Spleen (tissue), 13 donors: ENCODE measurements at regions of chr15 and their contacts with region 1.

Region 1: DNA sequence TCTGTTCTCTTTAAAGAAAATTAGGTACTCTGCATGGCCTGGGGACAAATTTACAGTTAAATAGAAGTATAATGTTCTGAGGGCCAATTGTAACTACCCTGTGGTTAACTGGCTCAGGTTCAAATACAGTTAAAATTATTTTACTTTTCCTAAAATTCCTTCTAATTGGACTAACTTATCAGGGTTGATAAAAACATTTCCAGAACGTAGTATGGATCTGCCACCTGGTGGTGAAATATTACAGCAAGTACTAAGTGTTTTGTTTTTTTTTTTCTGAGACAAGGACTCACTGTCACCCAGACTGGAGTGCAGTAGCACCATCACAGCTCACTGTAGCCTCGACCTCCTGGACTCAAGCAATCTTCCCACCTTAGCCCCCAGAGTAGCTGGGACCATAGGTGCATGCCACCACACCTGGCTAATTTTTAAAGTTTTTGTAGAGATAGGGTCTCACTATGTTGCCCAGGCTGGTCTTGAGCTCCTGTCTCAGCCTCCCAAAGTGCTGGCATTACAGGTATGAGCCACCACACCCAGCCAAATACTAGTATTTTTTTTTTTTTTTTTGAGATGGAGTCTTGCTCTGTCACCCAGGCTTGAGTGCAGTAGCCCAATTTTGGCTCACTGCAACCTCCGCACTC is 29.2 kb downstream of the NEO1 start:
- DNase-seq: no peak
- H3K4me3 ChIP-seq: no peak overlapping the region
- H3K27ac ChIP-seq: no peak overlapping the region
- H3K4me1 ChIP-seq: peaks cover 0 to 27% (median 19%) of the 10 kb centered on the region in 6 donors
- H3K27me3 ChIP-seq: peaks cover 0 to 57% (median 7%) of the 10 kb centered on the region in 7 donors
- CTCF ChIP-seq: peak in 9 of 11 experiments; percentile 31 to 70 (median 56)
- POLR2A ChIP-seq: no peak

Region 2: DNA sequence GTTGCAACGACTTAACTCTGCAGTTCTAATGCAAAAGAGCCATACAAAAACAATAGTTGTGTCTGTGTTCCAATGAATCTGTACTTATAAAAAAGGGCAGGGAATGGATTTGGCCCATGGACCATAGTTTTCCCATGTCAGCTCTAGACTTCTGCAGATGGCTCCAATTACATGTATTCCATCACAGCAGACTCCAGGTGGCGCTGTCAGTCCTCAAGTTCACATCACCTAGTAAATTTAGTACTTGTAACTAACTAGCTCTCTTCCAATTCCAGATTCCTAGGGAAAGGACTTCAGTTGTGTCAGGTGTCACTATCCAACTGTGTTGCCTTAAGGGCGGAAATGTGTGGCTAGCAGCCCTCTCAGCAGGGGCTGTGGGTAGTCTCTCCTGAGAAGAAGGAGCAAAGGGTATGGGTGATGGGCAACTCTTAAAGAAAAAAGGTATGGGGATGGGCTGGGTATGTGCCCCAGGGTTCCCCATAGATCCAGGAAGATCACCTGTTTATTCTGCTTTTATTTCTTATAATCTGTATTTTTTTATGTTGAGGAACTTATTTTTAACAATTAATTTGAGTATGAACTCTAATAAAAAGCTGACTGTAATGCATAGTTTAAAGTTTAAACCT is 359.3 kb before region 1 on chr15:
- intact Hi-C with region 1: loop called (anchors 5 kb)
- DNase-seq: peak; percentile 81
- H3K4me3 ChIP-seq: no peak overlapping the region
- H3K27ac ChIP-seq: no peak overlapping the region
- H3K4me1 ChIP-seq: no peaks in the 10 kb centered on the region
- H3K27me3 ChIP-seq: no peaks in the 10 kb centered on the region
- CTCF ChIP-seq: peak in 10 of 11 experiments; percentile 44 to 77 (median 63)
- POLR2A ChIP-seq: no peak

Region 3: GRCh38 chr15:72796515-72797337 is 284.7 kb before region 1 on chr15:
- intact Hi-C with region 1: loop called (anchors 5 kb)
- DNase-seq: peak; percentile 88
- H3K4me3 ChIP-seq: peak overlapping the region; percentile 35 to 72 (median 42)
- H3K27ac ChIP-seq: peak overlapping the region in 1 of 8 donors; percentile 20
- H3K4me1 ChIP-seq: peaks cover 0 to 19% (median 12%) of the 10 kb centered on the region in 6 donors
- H3K27me3 ChIP-seq: peaks cover 0 to 63% (median 17%) of the 10 kb centered on the region in 7 donors
- CTCF ChIP-seq: peak in 8 of 11 experiments; percentile 17 to 75 (median 63)
- POLR2A ChIP-seq: no peak